ENCODE measurements at regions of chr11 and their contacts with region 1.

Region 1: GRCh38 chr11:118565051-118565450 is 680 bp downstream of the IFT46 start:
- DNase-seq: peak in 9 of 42 donors; percentile 4 to 41 (median 17)

Region 2: GRCh38 chr11:118503216-118503615 is 61.8 kb before region 1 on chr11:
- intact Hi-C with region 1: no loop called
- DNase-seq: no peak

Region 3: DNA sequence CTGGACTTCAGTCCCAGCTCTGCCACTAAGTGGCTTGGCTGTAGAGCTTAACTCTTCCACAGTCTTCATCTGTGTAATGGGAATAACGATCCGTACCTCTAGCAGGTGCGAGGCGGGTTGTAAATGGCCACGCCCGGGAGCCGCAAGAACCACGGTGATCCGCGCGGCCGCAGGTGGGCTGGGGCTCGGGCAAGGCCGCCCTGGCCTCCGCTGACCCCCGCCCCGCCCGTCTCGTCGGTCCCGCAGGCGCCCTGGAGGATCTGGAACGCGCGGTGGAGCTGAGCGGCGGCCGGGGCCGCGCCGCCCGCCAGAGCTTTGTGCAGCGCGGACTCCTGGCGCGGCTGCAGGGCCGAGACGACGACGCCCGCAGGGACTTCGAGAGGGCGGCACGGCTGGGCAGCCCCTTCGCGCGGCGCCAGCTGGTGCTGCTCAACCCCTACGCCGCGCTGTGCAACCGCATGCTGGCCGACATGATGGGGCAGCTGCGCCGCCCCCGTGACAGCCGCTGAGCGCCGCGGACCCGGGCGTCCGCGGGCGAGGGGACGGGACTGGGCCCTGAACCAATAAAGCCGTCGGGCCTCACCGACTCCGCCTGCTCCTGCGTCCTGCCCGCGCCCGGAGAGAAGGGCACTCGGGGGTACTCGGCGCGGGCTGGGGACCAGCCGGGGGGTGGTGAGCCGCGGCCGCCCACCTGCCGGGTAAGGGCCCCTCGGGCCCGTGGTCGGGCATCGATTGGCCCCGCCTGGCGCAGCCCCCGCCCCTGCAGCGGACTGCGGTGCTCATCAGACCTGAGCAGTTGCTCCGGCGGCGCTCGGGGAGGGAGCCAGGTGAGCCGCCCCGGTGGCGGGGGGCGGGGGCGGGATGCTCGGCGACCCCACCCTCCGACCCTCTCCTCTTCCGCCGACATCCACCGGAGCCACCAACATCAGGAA is 34.4 kb before region 1 on chr11 and contains the start of gene TMEM25:
- intact Hi-C with region 1: loop called (anchors 5 kb)
- DNase-seq: peak; percentile 46 to 92 (median 84)

Region 4: DNA sequence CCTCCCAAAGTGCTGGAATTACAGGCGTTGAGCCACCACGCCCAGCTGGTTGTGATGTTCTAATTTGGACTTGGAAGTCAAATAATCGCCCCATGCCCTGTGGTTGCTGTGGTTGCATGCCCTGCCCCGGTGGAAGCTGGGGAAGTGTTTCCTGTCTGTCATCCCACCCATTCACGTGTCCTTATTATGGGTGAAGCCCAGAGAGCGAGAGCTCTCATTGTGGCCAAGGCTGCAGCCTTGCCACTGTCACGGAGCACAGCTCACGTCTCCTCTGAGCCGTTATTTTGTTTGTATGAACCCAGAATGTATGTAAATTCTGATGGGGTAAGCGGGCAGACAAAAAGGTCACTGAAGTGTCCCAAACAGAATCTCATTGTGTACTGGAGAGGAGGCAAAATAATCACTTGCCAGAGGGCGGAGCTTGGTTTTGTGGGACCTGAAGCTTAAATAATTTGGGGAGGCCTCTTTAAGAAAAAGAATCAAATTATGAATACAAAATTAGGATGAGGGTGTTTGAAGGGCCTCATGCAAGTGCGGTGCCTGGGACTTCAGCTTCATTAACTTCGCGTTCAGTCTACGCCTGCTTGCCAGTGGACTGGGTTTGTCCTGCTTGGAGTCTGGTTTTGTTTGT is 140.2 kb after region 1 on chr11:
- intact Hi-C with region 1: no loop called
- DNase-seq: peak; percentile 29 to 83 (median 60)

Measured in head of caudate nucleus (tissue), 42 donors.